AG04449 (cell line): ENCODE measurements at regions of chr16 and their contacts with region 1.

Region 1: DNA sequence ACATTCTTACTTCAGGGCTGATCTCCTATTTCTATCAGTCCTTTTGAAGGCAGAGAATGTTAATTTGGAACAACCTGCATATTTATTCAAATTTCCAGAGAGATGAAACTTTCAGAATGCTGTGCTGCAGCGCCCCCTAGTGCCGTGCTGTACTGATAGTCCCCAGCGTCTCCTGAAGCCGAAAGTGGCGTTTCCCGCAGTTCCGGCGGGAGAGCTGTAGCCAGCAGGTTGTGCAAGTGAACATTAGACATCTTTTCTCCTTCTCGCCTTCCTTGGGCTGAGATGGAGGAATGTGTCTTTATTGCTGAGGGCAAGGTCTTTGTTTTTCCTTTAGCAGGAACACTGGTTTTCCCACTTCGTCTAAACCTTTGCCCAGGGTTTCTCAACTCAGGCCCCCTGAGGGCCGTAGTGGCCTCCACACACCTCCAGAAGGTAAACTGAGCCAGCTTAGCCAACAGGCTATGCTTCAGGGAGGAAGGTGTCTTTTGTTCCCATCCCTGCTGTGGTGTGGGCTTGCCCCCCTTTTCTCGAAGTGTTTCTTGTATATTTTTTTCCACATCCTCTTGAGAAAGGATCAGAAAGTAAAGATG is 26.4 kb downstream of the USP10 start:
- DNase-seq: no peak
- H3K4me3 ChIP-seq: no peak overlapping the region
- CTCF ChIP-seq: peak; percentile 88

Region 2: GRCh38 chr16:84504420-84505248 is 221.5 kb before region 1 on chr16 and contains the start of gene MEAK7:
- CTCF ChIA-PET with region 1: interaction called, 34 read pairs
- POLR2A ChIA-PET with region 1: no interaction called
- DNase-seq: peak; percentile 77
- H3K4me3 ChIP-seq: peak within 1 kb of the TSS; percentile 100
- CTCF ChIP-seq: peak; percentile 39

Region 3: GRCh38 chr16:84647828-84648594 is 78.2 kb before region 1 on chr16 and contains the start of gene KLHL36:
- CTCF ChIA-PET with region 1: interaction called, 24 read pairs
- POLR2A ChIA-PET with region 1: no interaction called
- DNase-seq: no peak
- H3K4me3 ChIP-seq: peak within 1 kb of the TSS; percentile 68
- CTCF ChIP-seq: no peak

Region 4: DNA sequence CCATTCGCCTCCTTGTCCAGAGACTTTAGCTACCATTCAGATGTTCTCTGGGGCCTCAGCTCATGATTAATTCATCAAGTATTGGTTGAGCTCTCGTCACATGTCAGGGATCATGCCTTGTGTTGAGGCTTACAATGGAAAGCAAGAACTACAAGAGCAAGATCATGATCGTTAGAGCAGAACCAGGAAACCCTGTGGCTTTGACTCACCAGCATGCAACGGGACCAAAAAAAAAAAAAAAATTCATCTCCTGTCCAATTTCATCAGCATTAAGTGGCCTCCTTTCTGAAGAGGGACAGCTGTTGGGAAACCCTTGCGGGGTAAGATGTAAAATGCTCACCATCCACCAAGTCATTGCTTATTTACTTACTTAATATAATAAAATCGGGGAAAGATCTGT is 38.5 kb before region 1 on chr16:
- CTCF ChIA-PET with region 1: interaction called, 665 read pairs
- POLR2A ChIA-PET with region 1: interaction called, 3 read pairs
- DNase-seq: peak; percentile 78
- H3K4me3 ChIP-seq: no peak overlapping the region
- CTCF ChIP-seq: no peak

Region 5: GRCh38 chr16:84714028-84714427 is 12.1 kb before region 1 on chr16:
- CTCF ChIA-PET with region 1: interaction called, 108 read pairs
- POLR2A ChIA-PET with region 1: interaction called, 5 read pairs
- DNase-seq: no peak
- H3K4me3 ChIP-seq: no peak overlapping the region
- CTCF ChIP-seq: no peak